Activated CD4-positive, alpha-beta memory T cell treated with anti-CD3 and anti-CD28 coated beads for 36 hours (primary cell): ENCODE measurements at regions of chr15 and their contacts with region 1.

Region 1: GRCh38 chr15:40743921-40744814 is 10.9 kb downstream of the RMDN3 start:
- DNase-seq: peak; percentile 86
- H3K4me3 Mint-ChIP-seq: peak overlapping the region; percentile 49
- H3K27ac Mint-ChIP-seq: peak overlapping the region; percentile 89
- H3K4me1 Mint-ChIP-seq: peaks cover 29% of the 10 kb centered on the region
- H3K27me3 Mint-ChIP-seq: no peaks in the 10 kb centered on the region

Region 2: DNA sequence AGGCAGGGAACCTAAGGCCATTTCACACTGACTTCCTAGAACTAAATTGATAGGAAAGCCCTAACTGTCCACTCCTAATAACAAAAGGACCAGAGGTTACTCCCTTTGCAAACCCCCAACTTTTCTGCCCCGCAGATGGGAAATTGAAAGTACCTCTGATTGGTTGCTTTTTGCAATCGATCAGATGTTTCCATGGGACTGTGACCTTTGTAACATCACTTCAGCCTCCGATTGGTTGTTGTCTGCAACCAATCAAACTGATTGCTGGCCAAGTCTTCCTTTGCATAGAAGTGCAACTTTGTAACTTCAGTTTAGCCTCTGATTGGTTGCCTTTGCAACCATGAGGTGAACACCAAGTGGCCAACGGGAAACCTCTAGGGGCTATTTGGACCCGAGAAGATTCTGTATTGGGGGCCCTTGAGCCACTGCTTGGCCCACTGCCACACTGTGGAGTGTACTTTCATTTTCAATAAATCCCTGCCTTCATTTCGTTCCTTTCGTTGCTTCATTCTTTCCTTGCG is 161.4 kb before region 1 on chr15:
- CTCF ChIA-PET with region 1: no interaction called
- POLR2A ChIA-PET with region 1: no interaction called
- intact Hi-C with region 1: no loop called
- DNase-seq: no peak
- H3K4me3 Mint-ChIP-seq: no peak overlapping the region
- H3K27ac Mint-ChIP-seq: no peak overlapping the region
- H3K4me1 Mint-ChIP-seq: peaks cover 3% of the 10 kb centered on the region
- H3K27me3 Mint-ChIP-seq: no peaks in the 10 kb centered on the region

Region 3: DNA sequence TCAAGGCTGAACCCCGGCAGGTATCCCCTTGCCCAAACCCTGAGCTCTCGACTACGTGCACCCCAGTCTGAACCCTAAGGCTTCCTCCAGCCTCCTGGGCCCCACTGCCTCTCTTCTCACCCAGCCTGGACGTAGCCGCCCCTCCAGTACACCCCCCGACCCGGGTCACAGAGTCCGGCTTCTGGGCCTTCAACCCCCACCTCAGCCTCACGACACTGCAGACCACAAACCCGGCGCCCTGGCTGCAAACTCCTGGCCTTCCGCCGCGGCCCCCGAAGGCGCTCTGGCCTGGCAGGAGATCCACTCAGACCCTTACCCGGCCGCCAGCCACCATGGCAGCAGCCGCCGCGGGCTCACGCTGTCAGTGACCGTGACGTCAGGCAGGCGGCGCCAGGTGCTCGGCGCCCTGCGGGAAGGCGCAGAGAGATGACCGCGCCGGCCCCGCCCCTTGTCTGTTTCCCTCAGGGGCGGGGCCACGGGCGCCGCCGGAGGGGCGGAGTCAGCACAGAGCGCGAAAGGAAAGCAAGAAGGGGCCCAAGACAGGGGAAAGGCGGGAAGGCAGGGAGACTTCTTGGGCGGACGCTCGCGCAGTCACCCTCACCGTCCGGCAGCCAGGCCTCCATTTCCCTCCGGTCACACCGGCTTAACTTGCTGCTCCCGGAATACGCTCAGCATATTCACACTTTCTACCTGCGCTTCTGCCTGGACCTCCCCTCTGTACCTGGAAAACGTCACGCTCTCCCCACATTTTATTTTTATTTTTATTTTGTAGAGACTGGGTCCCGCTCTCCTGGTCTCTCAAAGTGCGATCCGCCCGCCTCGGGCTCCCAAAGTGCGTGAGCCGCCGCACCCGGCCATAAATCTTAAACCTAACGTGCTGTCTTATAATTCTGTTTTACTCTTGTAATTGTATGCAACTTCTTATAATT is 11.0 kb after region 1 on chr15 and contains the start of gene RMDN3:
- CTCF ChIA-PET with region 1: interaction called, 3 read pairs
- POLR2A ChIA-PET with region 1: interaction called, 7 read pairs
- intact Hi-C with region 1: loop called (anchors 1 kb)
- DNase-seq: peak; percentile 96
- H3K4me3 Mint-ChIP-seq: peak within 1 kb of the TSS; percentile 90
- H3K27ac Mint-ChIP-seq: peak within 1 kb of the TSS; percentile 94
- H3K4me1 Mint-ChIP-seq: peaks cover 28% of the 10 kb centered on the region
- H3K27me3 Mint-ChIP-seq: no peaks in the 10 kb centered on the region
- total RNA-seq, gene RMDN3: 22.6 to 22.7 TPM

Region 4: DNA sequence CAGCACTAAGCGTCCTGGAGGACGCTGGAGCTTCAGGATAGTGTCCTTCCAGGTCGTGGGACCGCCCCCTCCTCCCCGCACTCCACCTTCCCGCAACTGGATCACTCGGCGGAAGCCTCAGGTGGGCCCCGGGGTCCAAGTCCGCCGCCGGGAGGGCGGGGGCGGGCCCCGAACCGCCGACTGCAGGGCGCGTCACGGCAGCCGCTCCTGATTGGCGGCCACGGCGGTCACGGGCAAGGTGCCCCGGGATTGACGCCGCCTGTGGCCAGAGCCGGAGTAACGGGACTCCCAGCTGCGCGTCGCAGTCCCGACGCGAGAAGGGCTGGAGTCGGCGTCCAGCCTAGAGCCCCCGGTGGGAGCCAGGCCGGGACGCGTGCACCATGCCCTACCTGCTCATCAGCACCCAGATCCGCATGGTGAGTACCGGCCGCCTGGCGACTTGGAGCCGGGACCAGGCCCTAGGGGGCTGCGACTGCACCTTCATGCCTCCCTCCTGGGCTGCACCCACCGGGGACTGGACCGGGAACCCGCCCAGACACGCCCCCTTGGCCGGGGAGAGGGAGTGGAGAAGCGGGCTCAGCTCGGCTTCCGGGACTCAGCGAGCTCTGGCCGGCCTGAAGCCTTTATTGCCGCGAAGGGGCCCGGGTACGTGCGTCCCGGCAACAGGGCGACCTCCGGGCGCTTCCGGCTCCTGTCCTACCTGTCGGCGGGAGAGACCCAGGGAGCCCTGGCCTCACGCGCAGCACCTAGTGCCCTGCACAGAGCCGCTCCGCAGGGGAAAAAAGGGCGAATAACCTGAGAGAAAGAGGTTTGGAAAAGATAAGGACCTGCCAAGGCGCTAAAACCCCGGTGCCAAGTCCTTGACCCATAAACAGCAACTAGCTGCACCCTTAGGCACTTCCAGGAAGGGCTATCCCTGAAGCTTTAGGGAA is 19.9 kb after region 1 on chr15 and contains the start of gene GCHFR:
- CTCF ChIA-PET with region 1: interaction called, 4 read pairs
- POLR2A ChIA-PET with region 1: interaction called, 6 read pairs
- intact Hi-C with region 1: loop called (anchors 1 kb)
- DNase-seq: peak; percentile 82
- H3K4me3 Mint-ChIP-seq: peak within 1 kb of the TSS; percentile 63
- H3K27ac Mint-ChIP-seq: peak within 1 kb of the TSS; percentile 79
- H3K4me1 Mint-ChIP-seq: peaks cover 31% of the 10 kb centered on the region
- H3K27me3 Mint-ChIP-seq: no peaks in the 10 kb centered on the region
- total RNA-seq, gene GCHFR: 36.0 to 40.2 TPM